ENCODE measurements at regions of chr17 and their contacts with region 1.

Region 1: GRCh38 chr17:30970831-30971567 is at the start of gene RNF135:
- DNase-seq: peak; percentile 91 to 94
- H3K4me3 ChIP-seq: peak within 1 kb of the TSS; percentile 79 to 99
- H3K27ac ChIP-seq: peak within 1 kb of the TSS; percentile 93 to 98
- H3K4me1 ChIP-seq: peaks cover 0 to 16% (median 11%) of the 10 kb centered on the region in 4 donors
- H3K27me3 ChIP-seq: no peaks in the 10 kb centered on the region
- CTCF ChIP-seq: peak; percentile 45 to 72

Region 2: GRCh38 chr17:31013844-31014243 is 42.8 kb after region 1 on chr17:
- intact Hi-C with region 1: loop called (anchors 5 kb)
- DNase-seq: no peak
- H3K4me3 ChIP-seq: no peak overlapping the region
- H3K27ac ChIP-seq: no peak overlapping the region
- H3K4me1 ChIP-seq: peaks cover 0 to 26% (median 0%) of the 10 kb centered on the region in 4 donors
- H3K27me3 ChIP-seq: no peaks in the 10 kb centered on the region
- CTCF ChIP-seq: no peak